ENCODE measurements at regions of chrX and their contacts with region 1.

Region 1: GRCh38 chrX:100905620-100906019 is 23.1 kb downstream of the XKRX start:
- DNase-seq: no peak
- H3K4me3 ChIP-seq: no peak overlapping the region
- CTCF ChIP-seq: no peak

Region 2: GRCh38 chrX:100829730-100830129 is 75.9 kb before region 1 on chrX:
- in situ Hi-C with region 1: no loop called
- DNase-seq: no peak
- H3K4me3 ChIP-seq: no peak overlapping the region
- CTCF ChIP-seq: no peak

Region 3: GRCh38 chrX:100850317-100850716 is 55.3 kb before region 1 on chrX:
- in situ Hi-C with region 1: loop called (anchors 5 kb)
- DNase-seq: no peak
- H3K4me3 ChIP-seq: no peak overlapping the region
- CTCF ChIP-seq: no peak

Measured in astrocyte of the cerebellum (primary cell).